ENCODE measurements at regions of chr18 and their contacts with region 1.

Region 1: GRCh38 chr18:61635901-61636528 is 256.8 kb downstream of the RNF152 start:
- DNase-seq: peak; percentile 32 to 57
- ATAC-seq: peak; percentile 77 to 89 (median 85)
- H3K4me3 ChIP-seq: peak overlapping the region in 4 of 10 donors; percentile 9 to 21 (median 12)
- H3K27ac ChIP-seq: peak overlapping the region in 9 of 10 donors; percentile 1 to 73 (median 66)
- H3K4me1 ChIP-seq: peaks cover 0 to 24% (median 10%) of the 10 kb centered on the region in 9 donors
- H3K27me3 ChIP-seq: no peaks in the 10 kb centered on the region
- CTCF ChIP-seq: peak; percentile 87 to 95 (median 91)

Region 2: GRCh38 chr18:61727241-61728193 is 91.5 kb after region 1 on chr18:
- intact Hi-C with region 1: loop called in 1 of 10 experiments (anchors 10 kb)
- DNase-seq: no peak
- ATAC-seq: no peak
- H3K4me3 ChIP-seq: no peak overlapping the region
- H3K27ac ChIP-seq: no peak overlapping the region
- H3K4me1 ChIP-seq: peaks cover 0 to 23% (median 9%) of the 10 kb centered on the region in 9 donors
- H3K27me3 ChIP-seq: no peaks in the 10 kb centered on the region
- CTCF ChIP-seq: no peak

Region 3: GRCh38 chr18:61893971-61894750 is 258.1 kb after region 1 on chr18:
- intact Hi-C with region 1: loop called in 8 of 10 experiments (anchors 2 to 5 kb)
- DNase-seq: peak; percentile 87
- ATAC-seq: peak; percentile 90 to 96 (median 94)
- H3K4me3 ChIP-seq: peak overlapping the region; percentile 32 to 97 (median 90)
- H3K27ac ChIP-seq: peak overlapping the region; percentile 79 to 96 (median 90)
- H3K4me1 ChIP-seq: peaks cover 0 to 50% (median 31%) of the 10 kb centered on the region in 9 donors
- H3K27me3 ChIP-seq: peaks cover 0 to 61% (median 0%) of the 10 kb centered on the region in 7 donors
- CTCF ChIP-seq: peak; percentile 16 to 71 (median 37)

Region 4: GRCh38 chr18:62037989-62038778 is 402.2 kb after region 1 on chr18:
- intact Hi-C with region 1: no loop called
- DNase-seq: no peak
- ATAC-seq: peak in 7 of 8 donors; percentile 27 to 73 (median 53)
- H3K4me3 ChIP-seq: no peak overlapping the region
- H3K27ac ChIP-seq: peak overlapping the region in 3 of 10 donors; percentile 25 to 36 (median 32)
- H3K4me1 ChIP-seq: peaks cover 0 to 23% (median 9%) of the 10 kb centered on the region in 9 donors
- H3K27me3 ChIP-seq: no peaks in the 10 kb centered on the region
- CTCF ChIP-seq: peak in 2 of 9 donors; percentile 22 to 27

Measured in heart right ventricle (tissue), 16 donors.